Activated B cell treated with CpG ODN at 0.5 μM for 24 hours (primary cell): ENCODE measurements at regions of chr18 and their contacts with region 1.

Region 1: DNA sequence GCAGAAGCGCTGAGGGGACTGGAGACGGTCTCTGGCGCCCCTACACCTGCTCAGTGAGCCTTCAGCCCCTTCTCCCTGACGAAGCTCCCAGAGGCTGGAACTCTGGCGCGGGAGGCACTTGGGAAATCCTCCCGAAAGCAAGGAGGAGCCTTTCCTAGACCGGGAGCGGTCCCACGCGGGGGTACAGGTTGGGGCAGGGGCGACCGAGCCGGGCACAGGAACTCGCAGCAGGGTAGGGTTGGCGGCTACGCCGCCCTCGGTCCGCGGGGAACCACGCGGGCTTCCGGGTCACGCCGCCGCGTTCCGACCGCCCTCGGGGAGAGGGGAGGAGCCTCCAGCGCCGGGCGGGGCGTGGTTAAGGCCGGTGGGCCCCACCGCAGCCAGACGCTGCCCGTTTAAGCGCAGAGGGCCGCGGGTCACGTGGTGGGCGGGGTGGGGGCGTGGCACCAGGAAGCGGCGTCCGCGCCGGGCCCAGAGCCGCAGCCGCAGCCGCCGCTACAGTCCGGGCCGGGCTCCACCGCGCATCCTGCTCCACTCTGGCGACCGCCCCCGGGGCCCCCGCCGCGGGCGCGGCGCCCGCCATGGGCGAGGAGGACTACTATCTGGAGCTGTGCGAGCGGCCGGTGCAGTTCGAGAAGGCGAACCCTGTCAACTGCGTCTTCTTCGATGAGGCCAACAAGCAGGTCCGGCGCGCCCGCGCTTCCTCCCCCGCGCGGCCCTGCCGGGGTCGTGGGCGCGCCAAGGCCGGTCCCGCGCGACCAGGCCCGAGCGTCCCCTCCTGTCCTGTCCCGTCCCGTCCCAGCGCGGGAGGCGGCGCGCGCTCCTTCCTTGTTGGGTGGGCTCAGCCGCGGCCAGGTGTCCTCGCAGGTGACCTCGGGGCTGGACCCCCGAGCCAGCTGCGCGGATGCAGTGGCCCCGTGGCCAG is at the start of gene RMC1:
- DNase-seq: peak; percentile 100
- ATAC-seq: peak; percentile 89
- H3K4me3 Mint-ChIP-seq: peak within 1 kb of the TSS; percentile 93
- H3K27ac Mint-ChIP-seq: peak within 1 kb of the TSS; percentile 98
- H3K4me1 Mint-ChIP-seq: peaks cover 75% of the 10 kb centered on the region
- H3K27me3 Mint-ChIP-seq: no peaks in the 10 kb centered on the region
- CTCF ChIP-seq: no peak
- total RNA-seq, gene RMC1: 58.4 and 71.2 TPM in 2 replicates

Region 2: GRCh38 chr18:23231340-23232021 is 271.8 kb before region 1 on chr18:
- CTCF ChIA-PET with region 1: no interaction called
- POLR2A ChIA-PET with region 1: no interaction called
- intact Hi-C with region 1: loop called (anchors 5 kb)
- DNase-seq: peak; percentile 58
- ATAC-seq: peak; percentile 75
- H3K4me3 Mint-ChIP-seq: peak overlapping the region; percentile 76
- H3K27ac Mint-ChIP-seq: peak overlapping the region; percentile 97
- H3K4me1 Mint-ChIP-seq: peaks cover 74% of the 10 kb centered on the region
- H3K27me3 Mint-ChIP-seq: no peaks in the 10 kb centered on the region
- CTCF ChIP-seq: no peak

Region 3: GRCh38 chr18:23412351-23412964 is 90.8 kb before region 1 on chr18:
- CTCF ChIA-PET with region 1: interaction called, 4 read pairs
- POLR2A ChIA-PET with region 1: interaction called, 6 read pairs
- intact Hi-C with region 1: loop called (anchors 1 kb)
- DNase-seq: no peak
- ATAC-seq: no peak
- H3K4me3 Mint-ChIP-seq: no peak overlapping the region
- H3K27ac Mint-ChIP-seq: no peak overlapping the region
- H3K4me1 Mint-ChIP-seq: peaks cover 7% of the 10 kb centered on the region
- H3K27me3 Mint-ChIP-seq: no peaks in the 10 kb centered on the region
- CTCF ChIP-seq: no peak

Region 4: DNA sequence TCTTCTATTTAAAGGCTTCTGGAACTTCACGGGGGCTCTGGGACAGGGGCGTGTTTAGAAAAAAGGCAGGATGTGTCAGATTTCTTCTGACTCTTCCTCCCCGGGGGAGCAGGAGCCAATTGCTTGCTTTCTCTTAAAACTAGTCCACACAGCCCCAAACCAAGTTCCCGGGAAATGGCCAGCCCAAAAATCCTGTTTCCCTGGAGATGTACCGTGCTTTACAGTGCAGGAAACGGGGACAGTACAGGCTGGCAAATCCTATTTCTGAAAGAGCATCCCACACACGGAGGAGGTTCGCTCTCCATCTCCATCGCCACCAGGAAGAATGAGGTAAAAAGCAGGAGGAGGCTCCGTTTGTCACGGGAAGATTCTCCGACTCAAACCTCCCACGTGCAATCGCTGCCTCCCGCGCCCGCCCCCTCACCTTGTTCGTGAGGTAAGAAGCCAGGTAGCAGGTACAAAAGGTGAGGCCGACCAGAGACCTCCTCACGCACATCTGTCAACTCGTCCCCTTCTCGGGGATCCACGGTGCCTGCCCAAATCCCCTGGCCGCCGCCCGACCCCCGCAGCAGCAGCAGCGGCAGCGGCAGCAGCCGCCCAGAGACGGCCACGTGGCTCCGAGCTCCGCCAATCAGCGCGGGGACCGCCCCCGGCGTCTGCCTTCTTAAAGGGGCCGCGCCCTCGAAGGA is 65.8 kb before region 1 on chr18:
- CTCF ChIA-PET with region 1: no interaction called
- POLR2A ChIA-PET with region 1: interaction called, 3 read pairs
- intact Hi-C with region 1: loop called (anchors 1 kb)
- DNase-seq: peak; percentile 76
- ATAC-seq: peak; percentile 99
- H3K4me3 Mint-ChIP-seq: peak overlapping the region; percentile 93
- H3K27ac Mint-ChIP-seq: peak overlapping the region; percentile 68
- H3K4me1 Mint-ChIP-seq: peaks cover 14% of the 10 kb centered on the region
- H3K27me3 Mint-ChIP-seq: no peaks in the 10 kb centered on the region
- CTCF ChIP-seq: no peak

Region 5: GRCh38 chr18:23479829-23480505 is 23.3 kb before region 1 on chr18:
- CTCF ChIA-PET with region 1: interaction called, 27 read pairs
- POLR2A ChIA-PET with region 1: interaction called, 36 read pairs
- intact Hi-C with region 1: loop called (anchors 1 kb)
- DNase-seq: no peak
- ATAC-seq: peak; percentile 91
- H3K4me3 Mint-ChIP-seq: peak overlapping the region; percentile 59
- H3K27ac Mint-ChIP-seq: peak overlapping the region; percentile 93
- H3K4me1 Mint-ChIP-seq: peaks cover 62% of the 10 kb centered on the region
- H3K27me3 Mint-ChIP-seq: no peaks in the 10 kb centered on the region
- CTCF ChIP-seq: no peak

Region 6: DNA sequence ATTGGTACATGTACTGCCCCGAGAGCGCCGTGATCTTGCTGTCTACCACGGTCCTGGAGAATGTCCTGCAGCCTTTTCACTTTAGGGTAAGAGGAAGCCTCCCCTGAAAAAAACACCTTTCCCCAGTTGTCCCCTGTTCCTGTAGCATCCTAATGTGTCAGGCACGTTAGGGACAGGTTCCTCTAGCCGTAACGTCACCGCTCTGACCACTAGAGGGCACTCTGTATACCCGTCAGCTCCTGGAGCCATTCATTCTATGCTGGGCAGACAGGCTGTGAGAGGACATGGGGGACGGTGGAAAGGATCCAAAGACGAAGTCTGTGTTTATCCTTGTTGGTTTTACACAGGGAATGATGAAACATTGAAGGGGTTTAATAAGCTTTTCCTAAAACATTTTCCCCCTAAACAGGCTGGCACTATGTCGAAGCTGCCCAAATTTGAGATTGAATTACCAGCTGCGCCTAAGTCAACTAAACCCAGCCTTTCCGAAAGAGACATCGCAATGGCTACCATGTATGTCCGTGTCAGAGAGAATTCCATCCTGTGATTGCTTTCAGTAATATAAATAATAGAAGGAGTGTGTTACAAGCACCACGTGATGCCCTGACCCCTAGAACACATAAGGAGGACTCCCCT is 12.7 kb after region 1 on chr18:
- CTCF ChIA-PET with region 1: interaction called, 12 read pairs
- POLR2A ChIA-PET with region 1: interaction called, 3 read pairs
- intact Hi-C with region 1: loop called (anchors 1 kb)
- DNase-seq: peak; percentile 42
- ATAC-seq: peak; percentile 97
- H3K4me3 Mint-ChIP-seq: no peak overlapping the region
- H3K27ac Mint-ChIP-seq: peak overlapping the region; percentile 74
- H3K4me1 Mint-ChIP-seq: peaks cover 35% of the 10 kb centered on the region
- H3K27me3 Mint-ChIP-seq: no peaks in the 10 kb centered on the region
- CTCF ChIP-seq: peak; percentile 78

Region 7: GRCh38 chr18:24014062-24014985 is 511.0 kb after region 1 on chr18 and contains the start of gene TTC39C:
- CTCF ChIA-PET with region 1: no interaction called
- POLR2A ChIA-PET with region 1: no interaction called
- intact Hi-C with region 1: loop called (anchors 5 kb)
- DNase-seq: peak; percentile 76
- ATAC-seq: peak; percentile 66
- H3K4me3 Mint-ChIP-seq: peak within 1 kb of the TSS; percentile 89
- H3K27ac Mint-ChIP-seq: peak within 1 kb of the TSS; percentile 83
- H3K4me1 Mint-ChIP-seq: peaks cover 84% of the 10 kb centered on the region
- H3K27me3 Mint-ChIP-seq: no peaks in the 10 kb centered on the region
- CTCF ChIP-seq: no peak
- total RNA-seq, gene TTC39C: 60.6 and 68.4 TPM in 2 replicates

Region 8: GRCh38 chr18:25147877-25148488 is 1644.7 kb after region 1 on chr18:
- CTCF ChIA-PET with region 1: no interaction called
- POLR2A ChIA-PET with region 1: no interaction called
- intact Hi-C with region 1: no loop called
- DNase-seq: no peak
- ATAC-seq: no peak
- H3K4me3 Mint-ChIP-seq: no peak overlapping the region
- H3K27ac Mint-ChIP-seq: no peak overlapping the region
- H3K4me1 Mint-ChIP-seq: no peaks in the 10 kb centered on the region
- H3K27me3 Mint-ChIP-seq: no peaks in the 10 kb centered on the region
- CTCF ChIP-seq: no peak